ENCODE measurements at regions of chr3 and their contacts with region 1.

Region 1: GRCh38 chr3:24237971-24238767 is 256.5 kb downstream of the THRB start:
- DNase-seq: peak; percentile 77
- H3K4me3 Mint-ChIP-seq: no peak overlapping the region
- H3K27ac Mint-ChIP-seq: no peak overlapping the region
- H3K4me1 Mint-ChIP-seq: no peaks in the 10 kb centered on the region
- H3K27me3 Mint-ChIP-seq: peaks cover 6% of the 10 kb centered on the region

Region 2: GRCh38 chr3:23888617-23889228 is 349.4 kb before region 1 on chr3:
- intact Hi-C with region 1: loop called (anchors 2 kb)
- DNase-seq: peak; percentile 66
- H3K4me3 Mint-ChIP-seq: no peak overlapping the region
- H3K27ac Mint-ChIP-seq: no peak overlapping the region
- H3K4me1 Mint-ChIP-seq: no peaks in the 10 kb centered on the region
- H3K27me3 Mint-ChIP-seq: no peaks in the 10 kb centered on the region

Region 3: GRCh38 chr3:23904545-23904944 is 333.6 kb before region 1 on chr3:
- intact Hi-C with region 1: no loop called
- DNase-seq: no peak
- H3K4me3 Mint-ChIP-seq: no peak overlapping the region
- H3K27ac Mint-ChIP-seq: no peak overlapping the region
- H3K4me1 Mint-ChIP-seq: no peaks in the 10 kb centered on the region
- H3K27me3 Mint-ChIP-seq: no peaks in the 10 kb centered on the region

Region 4: GRCh38 chr3:23999012-23999641 is 239.0 kb before region 1 on chr3:
- intact Hi-C with region 1: loop called (anchors 1 kb)
- DNase-seq: peak; percentile 88
- H3K4me3 Mint-ChIP-seq: no peak overlapping the region
- H3K27ac Mint-ChIP-seq: no peak overlapping the region
- H3K4me1 Mint-ChIP-seq: peaks cover 4% of the 10 kb centered on the region
- H3K27me3 Mint-ChIP-seq: peaks cover 28% of the 10 kb centered on the region

Region 5: DNA sequence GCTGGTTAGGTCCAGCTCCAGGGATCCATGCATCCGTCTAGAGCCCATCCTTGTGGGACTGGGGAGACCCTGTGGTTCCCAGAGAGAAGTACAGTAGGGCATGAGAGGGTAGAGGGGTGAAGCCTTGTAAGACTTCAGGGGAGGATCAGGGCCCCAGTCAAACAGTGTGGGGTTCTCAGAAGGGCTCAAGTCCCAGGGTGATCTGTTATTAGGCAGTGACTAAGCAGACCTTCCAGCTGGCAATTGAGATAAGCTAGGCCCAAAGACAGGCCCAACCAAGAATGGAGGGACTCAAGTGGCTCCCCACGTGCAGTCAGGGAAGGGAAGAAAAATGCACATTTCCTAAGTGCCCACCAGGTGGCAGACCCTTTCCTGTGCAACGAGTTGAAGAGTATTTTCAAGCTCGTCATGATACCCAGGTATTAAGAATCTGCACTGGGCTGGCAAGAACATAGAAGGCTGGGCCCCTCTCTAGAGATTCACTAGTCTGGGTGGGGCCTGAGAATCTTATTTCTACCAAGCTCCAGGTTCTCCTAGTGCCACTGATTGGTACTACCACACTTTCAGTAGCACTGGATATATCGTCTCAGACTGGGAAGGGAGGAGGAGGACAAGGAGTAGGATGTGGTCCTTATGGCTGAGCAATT is 52.3 kb before region 1 on chr3:
- intact Hi-C with region 1: loop called (anchors 2 kb)
- DNase-seq: peak; percentile 59
- H3K4me3 Mint-ChIP-seq: no peak overlapping the region
- H3K27ac Mint-ChIP-seq: no peak overlapping the region
- H3K4me1 Mint-ChIP-seq: no peaks in the 10 kb centered on the region
- H3K27me3 Mint-ChIP-seq: peaks cover 4% of the 10 kb centered on the region